PC-9 (cell line): ENCODE measurements at regions of chr11 and their contacts with region 1.

Region 1: GRCh38 chr11:34468209-34468841 is 29.6 kb downstream of the CAT start:
- DNase-seq: peak; percentile 46 to 55
- H3K4me3 ChIP-seq: no peak overlapping the region
- H3K27ac ChIP-seq: no peak overlapping the region
- H3K4me1 ChIP-seq: no peaks in the 10 kb centered on the region
- H3K27me3 ChIP-seq: no peaks in the 10 kb centered on the region
- CTCF ChIP-seq: peak; percentile 91

Region 2: GRCh38 chr11:34149786-34150185 is 318.5 kb before region 1 on chr11:
- CTCF ChIA-PET with region 1: no interaction called
- POLR2A ChIA-PET with region 1: no interaction called
- intact Hi-C with region 1: loop called (anchors 5 kb)
- DNase-seq: peak in 1 of 2 experiments; percentile 33
- H3K4me3 ChIP-seq: no peak overlapping the region
- H3K27ac ChIP-seq: no peak overlapping the region
- H3K4me1 ChIP-seq: no peaks in the 10 kb centered on the region
- H3K27me3 ChIP-seq: no peaks in the 10 kb centered on the region
- CTCF ChIP-seq: 0 out of 2 replicates have a peak, but pooled peaks have one; percentile 49

Region 3: DNA sequence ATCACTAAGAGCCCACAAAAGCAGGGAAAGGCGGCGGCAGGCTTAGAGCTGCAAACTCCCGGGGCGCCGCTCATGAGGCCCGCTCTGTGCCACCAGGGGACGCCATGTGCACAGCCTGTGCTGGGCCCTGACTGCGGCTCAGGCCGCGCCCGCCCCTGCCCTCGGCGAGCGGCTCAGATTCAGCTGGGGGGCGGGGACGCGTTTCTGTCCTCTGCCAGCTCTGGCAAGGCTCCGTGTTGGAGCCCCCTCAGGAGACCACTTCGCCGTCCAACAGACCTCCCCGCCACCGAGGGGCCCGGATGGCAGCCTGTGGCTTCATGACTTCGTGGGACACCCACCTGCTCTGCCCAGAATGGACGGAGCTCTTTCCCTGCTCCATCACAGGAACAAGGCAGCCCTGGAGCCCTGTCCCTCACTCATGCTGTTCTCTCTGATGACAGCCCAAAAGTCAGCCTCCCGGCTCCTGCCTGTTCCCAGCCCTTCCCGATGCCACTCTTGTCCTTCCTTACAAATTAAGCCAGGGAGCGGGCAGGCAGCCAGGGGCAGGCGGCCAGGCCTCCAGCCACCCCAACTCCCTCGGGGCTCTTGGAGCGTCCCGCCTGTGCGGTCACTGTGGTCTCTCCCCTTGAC is 293.8 kb before region 1 on chr11:
- CTCF ChIA-PET with region 1: interaction called, 3 read pairs
- POLR2A ChIA-PET with region 1: no interaction called
- intact Hi-C with region 1: loop called (anchors 1 kb)
- DNase-seq: peak; percentile 53 to 85
- H3K4me3 ChIP-seq: peak overlapping the region; percentile 40; the same call in 1 of the 2 replicates
- H3K27ac ChIP-seq: no peak overlapping the region
- H3K4me1 ChIP-seq: peaks cover 8% of the 10 kb centered on the region
- H3K27me3 ChIP-seq: no peaks in the 10 kb centered on the region
- CTCF ChIP-seq: peak; percentile 92

Region 4: DNA sequence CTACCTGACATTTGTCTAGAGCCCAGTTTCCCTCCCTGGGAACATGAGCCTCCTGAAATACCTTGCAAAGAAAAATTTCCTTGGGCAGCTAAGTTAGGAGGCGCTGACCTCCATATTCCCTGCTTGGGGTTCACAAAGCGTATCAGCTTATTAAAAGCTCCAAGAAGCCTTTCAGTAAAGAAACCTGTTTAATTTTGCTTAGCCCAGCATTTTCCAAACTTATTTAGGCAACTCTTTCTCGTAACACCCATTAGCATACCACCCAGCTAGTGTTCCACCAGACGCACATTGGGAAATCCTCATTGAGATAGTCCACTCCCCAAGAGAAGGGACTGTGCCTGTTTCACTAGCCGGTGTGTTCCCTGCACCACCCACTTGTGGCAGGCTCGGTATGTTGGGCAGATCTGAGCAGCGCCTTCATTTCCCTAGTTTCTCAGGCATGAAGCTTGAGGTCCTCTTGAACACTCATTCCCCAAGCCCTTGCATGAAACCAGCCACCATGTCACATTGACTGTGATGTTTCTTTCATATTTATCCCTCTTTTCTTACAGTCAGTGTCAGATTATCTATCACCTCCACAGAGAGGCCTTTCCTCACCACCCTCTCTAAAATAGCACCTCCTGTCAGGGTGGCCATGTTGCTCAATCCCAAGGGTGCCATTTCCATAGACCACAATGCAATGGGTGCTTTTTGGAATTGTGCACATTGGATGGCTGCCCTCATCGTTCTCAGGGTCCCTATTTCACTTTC is 57.7 kb after region 1 on chr11:
- CTCF ChIA-PET with region 1: no interaction called
- POLR2A ChIA-PET with region 1: no interaction called
- intact Hi-C with region 1: no loop called
- DNase-seq: no peak
- H3K4me3 ChIP-seq: no peak overlapping the region
- H3K27ac ChIP-seq: no peak overlapping the region
- H3K4me1 ChIP-seq: no peaks in the 10 kb centered on the region
- H3K27me3 ChIP-seq: no peaks in the 10 kb centered on the region
- CTCF ChIP-seq: no peak

Region 5: GRCh38 chr11:34850343-34850742 is 382.0 kb after region 1 on chr11:
- CTCF ChIA-PET with region 1: no interaction called
- POLR2A ChIA-PET with region 1: interaction called, 10 read pairs
- intact Hi-C with region 1: no loop called
- DNase-seq: peak; percentile 27 to 76
- H3K4me3 ChIP-seq: no peak overlapping the region
- H3K27ac ChIP-seq: no peak overlapping the region
- H3K4me1 ChIP-seq: peaks cover 15% of the 10 kb centered on the region
- H3K27me3 ChIP-seq: no peaks in the 10 kb centered on the region
- CTCF ChIP-seq: no peak